H1 (cell line): ENCODE measurements at regions of chr2 and their contacts with region 1.

Region 1: DNA sequence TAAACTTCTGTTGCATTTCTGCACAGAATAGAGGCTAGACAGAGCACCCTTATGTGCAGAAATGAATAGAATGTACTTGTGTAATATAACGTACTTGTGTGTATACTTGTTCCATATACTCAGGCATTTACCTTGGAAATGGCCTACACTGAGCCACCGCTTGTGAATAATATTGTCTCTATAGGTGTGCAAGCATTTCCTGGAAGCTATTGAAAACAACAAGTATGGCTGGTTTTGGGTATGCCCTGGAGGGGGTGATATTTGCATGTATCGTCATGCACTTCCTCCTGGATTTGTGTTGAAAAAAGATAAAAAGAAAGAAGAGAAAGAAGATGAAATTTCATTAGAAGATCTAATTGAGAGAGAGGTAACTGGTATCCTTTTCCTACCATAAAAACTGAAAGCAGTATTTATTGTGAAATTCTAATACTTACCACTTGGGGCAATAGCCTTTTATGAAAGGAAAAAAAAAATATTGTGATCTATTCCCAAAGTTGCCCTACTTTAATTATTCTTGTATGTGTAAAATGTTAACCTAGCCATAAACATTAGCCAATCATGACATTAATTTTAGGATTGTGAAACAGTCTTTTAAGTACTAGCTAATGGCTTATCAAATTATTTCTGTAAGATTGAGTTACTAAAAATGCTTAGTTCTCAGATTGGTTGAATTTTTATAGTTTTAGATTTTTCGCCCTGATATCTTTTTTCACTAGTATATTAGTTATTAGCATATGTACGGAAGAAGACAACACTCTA is 18.0 kb downstream of the ZC3H15 start:
- DNase-seq: no peak
- H3K4me3 ChIP-seq: no peak overlapping the region
- H3K27ac ChIP-seq: no peak overlapping the region
- H3K4me1 ChIP-seq: no peaks in the 10 kb centered on the region
- H3K27me3 ChIP-seq: no peaks in the 10 kb centered on the region
- CTCF ChIP-seq: no peak; a peak in 1 of 4 replicates
- EP300 ChIP-seq: no peak
- POLR2A ChIP-seq: no peak
- RAD21 ChIP-seq: peak in 1 of 2 experiments; percentile 58; a peak in 3 of 4 replicates

Region 2: GRCh38 chr2:186422226-186422625 is 81.8 kb before region 1 on chr2:
- CTCF ChIA-PET with region 1: no interaction called
- POLR2A ChIA-PET with region 1: no interaction called
- DNase-seq: no peak
- H3K4me3 ChIP-seq: no peak overlapping the region
- H3K27ac ChIP-seq: no peak overlapping the region
- H3K4me1 ChIP-seq: 0 out of 7 replicates have a peak, but pooled peaks cover 0 to 2% (median 0%) of the 10 kb centered on the region in 4 experiments
- H3K27me3 ChIP-seq: no peaks in the 10 kb centered on the region
- CTCF ChIP-seq: no peak
- EP300 ChIP-seq: no peak
- POLR2A ChIP-seq: no peak
- RAD21 ChIP-seq: no peak

Region 3: GRCh38 chr2:186531257-186531763 is 27.3 kb after region 1 on chr2:
- CTCF ChIA-PET with region 1: interaction called, 13 read pairs
- POLR2A ChIA-PET with region 1: no interaction called
- DNase-seq: no peak
- H3K4me3 ChIP-seq: no peak overlapping the region
- H3K27ac ChIP-seq: no peak overlapping the region
- H3K4me1 ChIP-seq: no peaks in the 10 kb centered on the region
- H3K27me3 ChIP-seq: peaks cover 0 to 1% (median 0%) of the 10 kb centered on the region in 4 experiments; a peak in 1 of 7 replicates
- CTCF ChIP-seq: no peak
- EP300 ChIP-seq: no peak
- POLR2A ChIP-seq: no peak
- RAD21 ChIP-seq: no peak

Region 4: DNA sequence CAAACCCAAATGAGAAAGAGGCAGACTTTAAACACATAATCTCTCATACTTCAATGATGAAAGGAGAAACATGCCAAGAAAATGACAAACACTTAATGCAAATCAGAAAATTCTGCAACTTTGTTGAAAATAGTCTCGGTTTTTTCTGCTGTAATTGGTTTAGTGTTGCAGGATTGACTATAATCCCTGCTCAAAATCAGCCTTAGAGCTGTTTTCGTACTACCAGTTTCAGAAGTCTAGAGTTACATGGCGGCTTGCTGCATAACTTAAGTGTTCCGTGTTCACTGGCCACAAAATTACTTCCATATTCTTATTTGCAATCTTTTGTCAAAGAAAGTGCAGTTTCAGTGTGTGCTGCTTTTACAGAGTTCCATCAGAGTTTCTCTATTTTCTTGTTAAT is 36.9 kb after region 1 on chr2:
- CTCF ChIA-PET with region 1: interaction called, 16 read pairs
- POLR2A ChIA-PET with region 1: no interaction called
- DNase-seq: no peak
- H3K4me3 ChIP-seq: no peak overlapping the region
- H3K27ac ChIP-seq: no peak overlapping the region
- H3K4me1 ChIP-seq: peaks cover 0 to 6% (median 4%) of the 10 kb centered on the region in 4 experiments; a peak in 4 of 7 replicates
- H3K27me3 ChIP-seq: no peaks in the 10 kb centered on the region
- CTCF ChIP-seq: no peak
- EP300 ChIP-seq: no peak
- POLR2A ChIP-seq: no peak
- RAD21 ChIP-seq: no peak

Region 5: DNA sequence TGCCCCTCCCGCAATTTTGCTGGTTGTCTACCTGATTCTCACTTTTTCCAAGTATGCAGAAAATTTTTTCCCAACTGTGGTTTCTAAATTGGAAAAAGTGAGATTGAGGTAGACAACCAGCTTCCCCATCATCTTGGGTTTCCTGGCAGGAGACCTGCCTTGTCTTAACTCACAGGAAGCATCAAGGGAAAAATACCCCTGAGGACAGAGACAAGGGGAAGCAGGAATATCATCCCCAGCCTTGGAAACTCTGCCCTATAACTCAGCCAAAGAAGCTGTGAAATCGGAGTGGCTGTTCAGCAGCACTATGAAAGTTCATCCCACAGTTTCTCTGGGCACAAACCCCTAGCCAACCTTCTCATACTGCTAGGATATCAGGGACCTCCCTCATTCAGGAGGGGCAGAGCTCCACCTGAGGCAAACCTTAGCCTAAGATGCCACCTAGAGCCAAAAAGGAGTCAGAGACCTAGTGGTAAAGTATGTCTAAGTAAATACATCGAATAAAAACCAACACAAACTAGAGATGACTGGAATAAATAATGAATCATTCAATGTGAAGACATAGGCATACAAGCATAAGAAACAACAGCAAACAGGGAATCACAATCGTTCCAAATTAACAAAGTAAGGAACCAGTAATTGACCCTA is 276.8 kb after region 1 on chr2:
- CTCF ChIA-PET with region 1: interaction called, 13 read pairs
- POLR2A ChIA-PET with region 1: no interaction called
- DNase-seq: peak in 1 of 2 experiments; percentile 43
- H3K4me3 ChIP-seq: no peak overlapping the region
- H3K27ac ChIP-seq: no peak overlapping the region
- H3K4me1 ChIP-seq: no peaks in the 10 kb centered on the region
- H3K27me3 ChIP-seq: no peaks in the 10 kb centered on the region
- CTCF ChIP-seq: peak; percentile 26 to 85 (median 81)
- EP300 ChIP-seq: no peak
- POLR2A ChIP-seq: no peak
- RAD21 ChIP-seq: peak; percentile 99